Gastrocnemius medialis (tissue), 4 donors: ENCODE measurements at regions of chr5 and their contacts with region 1.

Region 1: GRCh38 chr5:115888027-115888426 is 46.3 kb downstream of the AP3S1 start:
- DNase-seq: no peak
- ATAC-seq: peak in 1 of 2 donors; percentile 33
- H3K4me3 ChIP-seq: no peak overlapping the region
- H3K27ac ChIP-seq: no peak overlapping the region
- H3K4me1 ChIP-seq: no peaks in the 10 kb centered on the region
- H3K27me3 ChIP-seq: no peaks in the 10 kb centered on the region
- CTCF ChIP-seq: no peak
- POLR2A ChIP-seq: no peak

Region 2: GRCh38 chr5:115735108-115735998 is 152.7 kb before region 1 on chr5:
- in situ Hi-C with region 1: no loop called
- intact Hi-C with region 1: no loop called
- DNase-seq: peak; percentile 6 to 34
- ATAC-seq: peak; percentile 50 to 82
- H3K4me3 ChIP-seq: no peak overlapping the region
- H3K27ac ChIP-seq: peak overlapping the region in 2 of 4 donors; percentile 27 to 39
- H3K4me1 ChIP-seq: no peaks in the 10 kb centered on the region
- H3K27me3 ChIP-seq: no peaks in the 10 kb centered on the region
- CTCF ChIP-seq: no peak
- POLR2A ChIP-seq: no peak

Region 3: DNA sequence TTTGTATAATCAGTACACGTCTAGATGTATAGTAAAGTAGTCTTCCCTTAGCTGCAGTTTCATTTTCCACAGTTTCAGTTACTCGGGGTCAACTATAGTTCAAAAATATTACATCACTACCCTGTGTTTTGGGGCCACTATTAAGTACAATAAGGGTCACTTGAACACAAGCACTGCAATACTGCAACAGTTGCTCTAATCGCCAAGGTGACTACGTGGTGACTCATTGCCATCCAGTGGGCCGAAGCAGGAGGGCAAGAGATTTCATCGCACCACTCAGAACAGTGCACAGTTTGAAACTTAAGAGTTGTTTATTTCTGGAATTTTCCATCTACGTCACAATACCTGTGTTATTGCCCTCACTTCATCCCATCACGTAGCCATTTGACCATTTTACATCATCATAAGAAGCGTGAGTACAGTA is 144.1 kb after region 1 on chr5 and contains the start of gene ARL14EPL:
- in situ Hi-C with region 1: loop called in 1 of 4 experiments (anchors 10 kb)
- intact Hi-C with region 1: loop called (anchors 10 kb)
- DNase-seq: peak; percentile 20 to 42
- ATAC-seq: peak; percentile 53 to 58
- H3K4me3 ChIP-seq: no peak within 1 kb of the TSS
- H3K27ac ChIP-seq: no peak within 1 kb of the TSS
- H3K4me1 ChIP-seq: no peaks in the 10 kb centered on the region
- H3K27me3 ChIP-seq: no peaks in the 10 kb centered on the region
- CTCF ChIP-seq: no peak
- POLR2A ChIP-seq: no peak
- total RNA-seq, gene ARL14EPL: 0.11 to 0.82 TPM in 2 of 4 donors, not detected in the others